PC-9 (cell line): ENCODE measurements at regions of chr11 and their contacts with region 1.

Region 1: GRCh38 chr11:69704508-69705253 is 859 bp upstream of the FGF19 start:
- DNase-seq: peak in 1 of 2 experiments; percentile 60
- H3K4me3 ChIP-seq: peak overlapping the region; percentile 61
- H3K27ac ChIP-seq: no peak overlapping the region
- H3K4me1 ChIP-seq: peaks cover 21% of the 10 kb centered on the region
- H3K27me3 ChIP-seq: no peaks in the 10 kb centered on the region
- CTCF ChIP-seq: peak; percentile 82

Region 2: DNA sequence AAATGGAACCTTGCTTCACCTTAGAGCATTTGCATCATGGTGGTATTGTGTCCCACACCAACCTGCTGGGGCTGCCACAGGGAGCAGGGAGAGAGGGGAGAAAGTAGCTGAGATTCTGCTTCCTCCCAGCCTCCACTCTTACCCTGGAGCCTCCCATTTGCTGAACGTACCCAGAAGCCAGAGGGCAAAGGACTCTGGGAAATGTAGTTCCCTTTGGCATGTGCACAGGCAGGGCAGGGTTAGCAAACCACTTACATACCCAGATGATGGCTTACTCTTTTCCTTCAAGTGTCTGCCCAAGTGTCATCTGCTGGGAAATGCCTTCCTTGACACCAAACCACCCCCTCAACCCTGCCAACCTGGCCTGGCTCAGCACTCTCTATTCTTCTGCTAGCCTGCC is 532.0 kb before region 1 on chr11:
- CTCF ChIA-PET with region 1: no interaction called
- POLR2A ChIA-PET with region 1: no interaction called
- intact Hi-C with region 1: no loop called
- DNase-seq: no peak
- H3K4me3 ChIP-seq: no peak overlapping the region
- H3K27ac ChIP-seq: no peak overlapping the region
- H3K4me1 ChIP-seq: peaks cover 35% of the 10 kb centered on the region
- H3K27me3 ChIP-seq: no peaks in the 10 kb centered on the region
- CTCF ChIP-seq: no peak

Region 3: GRCh38 chr11:69686452-69686851 is 18.2 kb before region 1 on chr11:
- CTCF ChIA-PET with region 1: no interaction called
- POLR2A ChIA-PET with region 1: no interaction called
- intact Hi-C with region 1: loop called (anchors 2 kb)
- DNase-seq: peak in 1 of 2 experiments; percentile 9
- H3K4me3 ChIP-seq: no peak overlapping the region
- H3K27ac ChIP-seq: no peak overlapping the region
- H3K4me1 ChIP-seq: peaks cover 63% of the 10 kb centered on the region
- H3K27me3 ChIP-seq: no peaks in the 10 kb centered on the region
- CTCF ChIP-seq: no peak

Region 4: GRCh38 chr11:69888483-69889076 is 183.9 kb after region 1 on chr11:
- CTCF ChIA-PET with region 1: interaction called, 3 read pairs
- POLR2A ChIA-PET with region 1: no interaction called
- intact Hi-C with region 1: loop called (anchors 2 kb)
- DNase-seq: peak; percentile 70 to 85
- H3K4me3 ChIP-seq: no peak overlapping the region
- H3K27ac ChIP-seq: no peak overlapping the region
- H3K4me1 ChIP-seq: peaks cover 41% of the 10 kb centered on the region
- H3K27me3 ChIP-seq: no peaks in the 10 kb centered on the region
- CTCF ChIP-seq: peak; percentile 97

Region 5: DNA sequence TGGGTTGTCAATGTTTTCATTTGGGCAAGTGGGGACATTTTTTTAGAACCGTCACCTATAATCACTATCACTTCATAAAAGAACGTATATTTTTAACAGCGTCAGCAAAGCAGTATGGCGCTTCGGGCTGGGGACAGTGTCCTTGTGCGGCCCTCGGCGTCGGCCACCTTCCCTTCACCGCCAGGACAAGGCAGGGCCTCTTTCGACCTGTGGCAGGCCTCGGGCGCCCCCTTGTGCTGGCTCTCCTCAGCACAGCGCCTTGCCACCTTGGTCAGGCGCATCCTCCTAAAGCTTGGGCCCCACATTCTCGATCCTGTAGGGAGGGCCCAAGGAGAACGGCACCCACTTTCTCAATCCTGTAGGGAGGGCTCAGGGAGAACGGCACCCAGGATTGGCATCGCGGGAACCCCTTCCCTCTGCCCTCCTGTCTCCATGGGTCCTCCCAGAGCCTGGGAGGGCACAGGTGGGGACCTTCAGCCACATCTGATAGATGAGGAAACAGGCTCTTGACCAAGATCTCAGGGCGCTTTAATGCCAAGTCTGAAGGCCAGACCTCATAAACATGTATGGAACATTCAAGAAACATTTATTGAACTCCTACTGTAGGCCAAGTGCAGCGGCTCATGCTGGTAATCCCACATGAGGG is 486.9 kb after region 1 on chr11:
- CTCF ChIA-PET with region 1: no interaction called
- POLR2A ChIA-PET with region 1: no interaction called
- intact Hi-C with region 1: loop called (anchors 5 kb)
- DNase-seq: peak; percentile 62 to 90
- H3K4me3 ChIP-seq: no peak overlapping the region
- H3K27ac ChIP-seq: no peak overlapping the region
- H3K4me1 ChIP-seq: peaks cover 13% of the 10 kb centered on the region; the same call in 1 of the 2 replicates
- H3K27me3 ChIP-seq: no peaks in the 10 kb centered on the region
- CTCF ChIP-seq: peak; percentile 93